ENCODE measurements at regions of chr14 and their contacts with region 1.

Region 1: DNA sequence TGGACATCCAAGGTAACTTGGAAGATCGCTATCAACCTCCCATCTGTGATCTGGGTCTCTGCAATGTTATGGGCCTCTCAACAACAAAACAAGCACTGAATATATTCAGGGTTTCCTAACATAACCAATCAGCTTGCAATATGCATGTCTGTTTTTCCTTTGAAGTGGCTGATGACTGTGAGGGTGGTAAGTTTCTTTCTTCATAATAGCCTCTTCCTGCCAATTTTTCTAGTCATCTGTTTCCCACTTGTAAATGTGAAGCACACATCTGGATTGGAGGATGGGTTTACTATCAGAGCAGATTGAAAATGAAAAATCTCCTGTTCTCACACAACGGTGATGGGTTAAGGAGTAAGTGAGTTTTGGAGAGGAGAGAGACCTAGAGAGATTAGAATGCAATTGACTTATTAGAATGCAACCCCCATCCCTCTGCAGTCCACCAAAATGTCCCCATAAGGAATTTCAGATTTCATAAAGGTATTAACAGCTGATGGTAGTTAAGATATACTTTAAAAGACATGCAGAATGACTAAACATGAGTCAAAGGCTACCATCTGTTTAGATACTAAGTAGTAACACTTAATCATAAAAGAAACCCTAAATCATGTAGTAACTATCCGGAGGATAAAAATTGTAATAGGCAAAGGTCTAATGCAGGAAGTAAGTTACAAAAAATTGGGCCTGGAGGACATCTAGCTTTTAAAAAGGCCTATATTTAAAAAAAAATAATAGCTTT is 58.4 kb upstream of the SAV1 start:
- DNase-seq: peak in 4 of 5 donors; percentile 53 to 65 (median 56)
- H3K4me3 ChIP-seq: no peak overlapping the region
- H3K4me3 Mint-ChIP-seq: peak overlapping the region in 7 of 8 donors; percentile 0 to 63 (median 49)
- H3K27ac ChIP-seq: peak overlapping the region; percentile 42
- H3K27ac Mint-ChIP-seq: peak overlapping the region; percentile 54 to 94 (median 80)
- H3K4me1 ChIP-seq: peaks cover 19% of the 10 kb centered on the region
- H3K4me1 Mint-ChIP-seq: peaks cover 14 to 32% (median 21%) of the 10 kb centered on the region in 4 donors
- H3K27me3 ChIP-seq: no peaks in the 10 kb centered on the region
- H3K27me3 Mint-ChIP-seq: no peaks in the 10 kb centered on the region

Region 2: DNA sequence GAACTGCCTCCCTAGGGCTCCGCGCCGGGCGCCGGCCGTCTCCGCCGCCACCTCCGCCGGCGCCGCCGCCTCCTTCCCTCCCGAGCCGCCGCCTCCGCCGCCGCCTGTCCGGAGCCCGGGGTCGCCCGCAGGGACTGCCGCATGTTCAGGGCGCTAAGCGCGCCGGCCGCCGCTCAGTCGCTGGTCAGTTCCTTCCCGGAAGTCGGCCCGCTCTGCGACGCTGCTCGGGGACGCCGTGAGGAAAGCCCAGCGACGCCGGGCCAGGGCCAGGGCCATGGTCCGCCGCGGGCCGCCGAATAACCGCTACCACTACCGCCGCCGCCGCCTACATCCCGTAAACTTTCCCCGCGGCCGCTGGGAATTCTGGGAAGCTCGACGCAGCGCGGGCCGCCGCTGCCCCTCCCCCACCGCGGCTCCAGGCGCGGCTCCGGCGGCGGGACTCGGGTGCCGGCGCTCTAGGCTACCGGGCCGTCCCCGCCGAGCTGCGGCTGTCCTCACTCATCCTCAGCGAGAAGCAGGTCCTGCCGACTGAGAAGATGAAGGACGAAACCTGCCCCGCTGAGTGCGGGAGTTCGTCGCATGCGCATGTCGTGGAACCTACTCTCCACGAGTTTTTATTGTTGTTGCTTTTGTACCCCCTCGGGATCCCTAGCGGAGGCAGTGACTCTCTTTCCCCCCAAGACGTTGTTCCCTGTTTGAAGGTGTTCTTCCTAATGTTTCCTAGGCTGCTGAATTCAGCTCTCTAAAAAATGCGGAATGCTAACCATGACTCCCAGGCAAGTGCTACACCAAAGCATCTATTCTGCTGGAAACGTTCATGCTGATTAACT is 58.3 kb before region 1 on chr14 and contains the start of gene SAV1:
- CTCF ChIA-PET with region 1: no interaction called
- POLR2A ChIA-PET with region 1: no interaction called
- intact Hi-C with region 1: loop called (anchors 5 kb)
- DNase-seq: peak; percentile 41 to 50 (median 45)
- H3K4me3 ChIP-seq: peak within 1 kb of the TSS; percentile 48 to 70
- H3K4me3 Mint-ChIP-seq: peak within 1 kb of the TSS in 2 of 8 donors; percentile 94 to 96
- H3K27ac ChIP-seq: peak within 1 kb of the TSS; percentile 52
- H3K27ac Mint-ChIP-seq: peak within 1 kb of the TSS in 6 of 7 donors; percentile 89 to 95 (median 92)
- H3K4me1 ChIP-seq: peaks cover 19% of the 10 kb centered on the region
- H3K4me1 Mint-ChIP-seq: peaks cover 14 to 20% (median 20%) of the 10 kb centered on the region in 4 donors
- H3K27me3 ChIP-seq: no peaks in the 10 kb centered on the region
- H3K27me3 Mint-ChIP-seq: no peaks in the 10 kb centered on the region
- total RNA-seq, gene SAV1: 13.9 to 14.5 TPM

Region 3: GRCh38 chr14:50714450-50715073 is 12.0 kb before region 1 on chr14:
- CTCF ChIA-PET with region 1: interaction called, 16 read pairs
- POLR2A ChIA-PET with region 1: interaction called, 3 read pairs
- intact Hi-C with region 1: no loop called
- DNase-seq: peak in 3 of 5 donors; percentile 4 to 14 (median 12)
- H3K4me3 ChIP-seq: no peak overlapping the region
- H3K4me3 Mint-ChIP-seq: no peak overlapping the region
- H3K27ac ChIP-seq: no peak overlapping the region
- H3K27ac Mint-ChIP-seq: no peak overlapping the region
- H3K4me1 ChIP-seq: no peaks in the 10 kb centered on the region
- H3K4me1 Mint-ChIP-seq: peaks cover 0 to 2% (median 0%) of the 10 kb centered on the region in 4 donors
- H3K27me3 ChIP-seq: no peaks in the 10 kb centered on the region
- H3K27me3 Mint-ChIP-seq: peaks cover 0 to 1% of the 10 kb centered on the region in 2 donors